ENCODE measurements at regions of chr17 and their contacts with region 1.

Region 1: GRCh38 chr17:4304417-4305027 is 40.7 kb upstream of the ANKFY1 start:
- DNase-seq: peak; percentile 52
- H3K4me3 Mint-ChIP-seq: no peak overlapping the region
- H3K27ac Mint-ChIP-seq: no peak overlapping the region
- H3K4me1 Mint-ChIP-seq: peaks cover 17% of the 10 kb centered on the region
- H3K27me3 Mint-ChIP-seq: no peaks in the 10 kb centered on the region

Region 2: DNA sequence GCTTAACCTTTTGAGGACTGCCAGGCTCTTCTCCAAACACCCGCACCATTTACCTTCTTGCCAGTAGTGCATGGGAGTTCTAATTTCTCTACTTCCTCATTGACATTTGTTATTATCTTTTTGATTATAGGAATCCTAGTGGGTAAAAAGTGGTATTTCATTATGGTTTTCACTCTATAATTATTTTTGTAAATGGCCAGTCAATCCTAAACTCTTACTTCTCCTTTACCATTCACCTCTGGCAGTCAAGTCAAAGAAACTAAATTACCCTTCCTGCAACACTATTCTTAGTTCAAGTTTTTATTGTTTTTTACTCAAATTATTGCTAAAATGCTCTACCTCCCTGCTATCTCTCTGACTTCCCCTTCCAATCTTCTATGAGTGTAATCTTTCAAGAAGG is 10.9 kb before region 1 on chr17:
- CTCF ChIA-PET with region 1: interaction called, 13 read pairs
- POLR2A ChIA-PET with region 1: interaction called, 3 read pairs
- DNase-seq: no peak
- H3K4me3 Mint-ChIP-seq: no peak overlapping the region
- H3K27ac Mint-ChIP-seq: no peak overlapping the region
- H3K4me1 Mint-ChIP-seq: no peaks in the 10 kb centered on the region
- H3K27me3 Mint-ChIP-seq: no peaks in the 10 kb centered on the region

Region 3: DNA sequence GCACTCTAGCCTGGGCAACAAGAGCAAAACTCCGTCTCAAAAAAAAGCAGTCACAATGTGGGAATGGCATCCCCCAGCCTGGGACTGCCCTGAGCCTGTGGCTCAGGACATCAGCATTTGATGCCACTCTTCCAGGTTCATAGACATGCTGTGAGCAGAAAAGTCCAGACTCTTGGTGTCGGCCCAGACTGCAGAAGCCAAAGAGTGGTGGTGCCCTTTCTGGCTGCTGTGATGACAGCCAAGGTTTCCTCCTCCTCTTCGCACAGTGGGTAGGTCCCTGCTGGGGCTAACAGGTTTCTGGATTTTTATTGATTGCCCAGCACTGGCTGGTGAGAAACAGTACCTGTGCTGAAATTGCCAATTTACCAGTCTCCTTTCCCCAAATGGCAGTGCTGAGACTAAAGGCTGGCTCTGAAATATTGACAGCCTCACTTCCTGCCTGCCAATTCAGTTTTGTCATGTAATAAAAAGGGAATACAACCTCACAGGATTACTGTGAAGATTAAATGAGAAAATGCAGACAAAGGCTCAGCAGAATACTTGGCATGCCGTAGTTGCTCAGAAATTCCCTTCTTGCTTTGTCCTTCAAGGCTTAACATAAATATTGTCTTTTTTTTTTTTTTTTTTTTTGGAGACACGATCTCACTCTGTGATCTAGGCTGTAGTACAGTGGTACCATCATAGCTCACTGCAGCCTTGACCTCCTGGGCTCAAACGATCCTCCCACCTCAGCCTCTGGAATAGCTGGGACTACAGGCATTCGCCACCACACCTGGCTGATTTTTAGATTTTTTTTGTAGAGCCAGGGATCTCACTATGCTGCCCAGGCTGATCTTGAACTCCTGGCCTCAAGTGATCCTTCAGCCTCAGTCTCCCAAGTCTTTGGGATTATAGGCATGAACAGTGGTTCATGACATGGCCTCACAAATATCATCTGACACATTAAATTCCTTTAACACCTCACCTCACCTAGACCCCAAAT is 77.5 kb after region 1 on chr17:
- CTCF ChIA-PET with region 1: no interaction called
- POLR2A ChIA-PET with region 1: no interaction called
- DNase-seq: no peak
- H3K4me3 Mint-ChIP-seq: no peak overlapping the region
- H3K27ac Mint-ChIP-seq: no peak overlapping the region
- H3K4me1 Mint-ChIP-seq: peaks cover 10% of the 10 kb centered on the region
- H3K27me3 Mint-ChIP-seq: peaks cover 7% of the 10 kb centered on the region

Region 4: GRCh38 chr17:4422864-4423263 is 118.3 kb after region 1 on chr17:
- CTCF ChIA-PET with region 1: no interaction called
- POLR2A ChIA-PET with region 1: no interaction called
- DNase-seq: no peak
- H3K4me3 Mint-ChIP-seq: no peak overlapping the region
- H3K27ac Mint-ChIP-seq: no peak overlapping the region
- H3K4me1 Mint-ChIP-seq: peaks cover 4% of the 10 kb centered on the region
- H3K27me3 Mint-ChIP-seq: peaks cover 1% of the 10 kb centered on the region